Activated CD8-positive, alpha-beta memory T cell treated with anti-CD3 and anti-CD28 coated beads, Interleukin-2, amount 10 ng/mL, durations not matched to agents 7 days and 5 days (primary cell): ENCODE measurements at regions of chr9 and their contacts with region 1.

Region 1: GRCh38 chr9:88593537-88594185 is 58.7 kb downstream of the NXNL2 start:
- DNase-seq: peak; percentile 74
- ATAC-seq: peak; percentile 80
- H3K4me3 Mint-ChIP-seq: no peak overlapping the region
- H3K27ac Mint-ChIP-seq: no peak overlapping the region
- H3K4me1 Mint-ChIP-seq: peaks cover 15% of the 10 kb centered on the region
- H3K27me3 Mint-ChIP-seq: peaks cover 44% of the 10 kb centered on the region

Region 2: GRCh38 chr9:88411483-88411882 is 182.2 kb before region 1 on chr9:
- CTCF ChIA-PET with region 1: no interaction called
- DNase-seq: no peak
- ATAC-seq: no peak
- H3K4me3 Mint-ChIP-seq: no peak overlapping the region
- H3K27ac Mint-ChIP-seq: no peak overlapping the region
- H3K4me1 Mint-ChIP-seq: peaks cover 10% of the 10 kb centered on the region
- H3K27me3 Mint-ChIP-seq: no peaks in the 10 kb centered on the region

Region 3: DNA sequence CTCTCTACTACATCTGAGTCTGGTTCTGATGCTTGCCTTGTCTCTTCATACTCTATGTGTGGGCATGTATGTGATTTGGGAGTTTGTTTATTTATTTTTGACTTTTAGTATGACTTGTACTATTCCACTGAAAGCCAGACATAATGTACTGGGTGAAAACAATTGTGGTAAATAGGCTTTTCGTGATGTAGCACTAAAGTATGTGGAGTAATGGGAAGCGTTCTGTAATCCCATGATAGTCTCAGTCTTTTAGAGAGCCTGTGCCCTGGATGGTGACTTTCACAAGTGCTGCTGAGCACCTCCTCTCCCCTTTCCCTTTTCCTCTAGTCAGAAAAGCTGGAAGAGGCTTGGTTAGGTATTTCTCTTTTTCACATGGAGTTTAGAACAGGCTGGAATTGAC is 311.8 kb after region 1 on chr9:
- CTCF ChIA-PET with region 1: no interaction called
- DNase-seq: no peak
- ATAC-seq: no peak
- H3K4me3 Mint-ChIP-seq: no peak overlapping the region
- H3K27ac Mint-ChIP-seq: no peak overlapping the region
- H3K4me1 Mint-ChIP-seq: no peaks in the 10 kb centered on the region
- H3K27me3 Mint-ChIP-seq: peaks cover 31% of the 10 kb centered on the region

Region 4: GRCh38 chr9:89000973-89001916 is 407.6 kb after region 1 on chr9:
- CTCF ChIA-PET with region 1: interaction called, 11 read pairs
- DNase-seq: peak; percentile 81
- ATAC-seq: peak; percentile 63
- H3K4me3 Mint-ChIP-seq: no peak overlapping the region
- H3K27ac Mint-ChIP-seq: no peak overlapping the region
- H3K4me1 Mint-ChIP-seq: peaks cover 2% of the 10 kb centered on the region
- H3K27me3 Mint-ChIP-seq: peaks cover 20% of the 10 kb centered on the region